Activated CD4-positive, alpha-beta memory T cell treated with anti-CD3 and anti-CD28 coated beads, Interleukin-2, amount 10 ng/mL, durations not matched to agents 7 days and 5 days (primary cell): ENCODE measurements at regions of chr1 and their contacts with region 1.

Region 1: GRCh38 chr1:44730741-44731512 is at the start of gene RNU5D-1:
- DNase-seq: peak; percentile 95
- H3K4me3 Mint-ChIP-seq: peak within 1 kb of the TSS; percentile 62
- H3K27ac Mint-ChIP-seq: peak within 1 kb of the TSS; percentile 99
- H3K4me1 Mint-ChIP-seq: peaks cover 35% of the 10 kb centered on the region
- H3K27me3 Mint-ChIP-seq: peaks cover 4% of the 10 kb centered on the region
- total RNA-seq, gene RNU5D-1: not detected

Region 2: DNA sequence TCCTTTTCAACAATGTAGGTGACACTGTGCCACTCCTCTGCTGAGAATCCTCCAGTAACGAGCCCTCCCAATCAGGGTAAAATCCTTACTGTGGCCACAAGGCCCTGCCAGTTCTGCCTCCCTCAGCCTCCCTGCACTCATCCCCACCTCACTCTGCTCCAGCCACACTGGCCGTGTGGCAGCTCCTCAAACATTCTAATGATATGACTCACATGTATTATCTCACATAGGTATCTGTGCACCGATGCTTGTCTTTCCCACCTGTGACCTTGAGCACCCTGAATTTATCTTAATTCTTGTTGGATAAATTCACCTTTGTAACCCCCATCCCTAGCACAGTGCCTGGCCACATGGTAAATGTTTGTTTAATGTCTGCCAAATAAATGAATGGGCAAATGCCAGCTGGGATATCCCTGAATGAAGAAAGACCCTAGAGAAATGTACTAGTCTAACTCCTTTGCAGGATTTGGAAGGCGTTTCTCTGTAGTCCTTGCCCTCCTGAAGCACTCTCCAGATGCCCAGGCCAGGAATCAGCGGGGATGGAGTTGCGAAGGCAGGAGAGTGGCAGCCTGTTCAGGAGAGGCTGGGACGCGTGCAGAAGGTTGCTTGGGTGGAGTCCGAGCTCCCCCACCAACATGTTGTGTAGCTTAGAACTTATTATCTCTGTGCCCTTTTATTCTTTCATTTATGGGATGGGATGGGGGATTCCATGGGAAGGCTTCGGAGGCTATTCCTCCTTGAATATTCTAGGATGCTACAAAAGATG is 162.6 kb before region 1 on chr1:
- CTCF ChIA-PET with region 1: no interaction called
- POLR2A ChIA-PET with region 1: no interaction called
- DNase-seq: no peak
- H3K4me3 Mint-ChIP-seq: no peak overlapping the region
- H3K27ac Mint-ChIP-seq: no peak overlapping the region
- H3K4me1 Mint-ChIP-seq: no peaks in the 10 kb centered on the region
- H3K27me3 Mint-ChIP-seq: peaks cover 28% of the 10 kb centered on the region

Region 3: GRCh38 chr1:44714944-44715571 is 15.9 kb before region 1 on chr1:
- CTCF ChIA-PET with region 1: interaction called, 59 read pairs
- POLR2A ChIA-PET with region 1: interaction called, 785 read pairs
- DNase-seq: peak; percentile 74
- H3K4me3 Mint-ChIP-seq: peak overlapping the region; percentile 24
- H3K27ac Mint-ChIP-seq: peak overlapping the region; percentile 64
- H3K4me1 Mint-ChIP-seq: peaks cover 44% of the 10 kb centered on the region
- H3K27me3 Mint-ChIP-seq: peaks cover 12% of the 10 kb centered on the region

Region 4: DNA sequence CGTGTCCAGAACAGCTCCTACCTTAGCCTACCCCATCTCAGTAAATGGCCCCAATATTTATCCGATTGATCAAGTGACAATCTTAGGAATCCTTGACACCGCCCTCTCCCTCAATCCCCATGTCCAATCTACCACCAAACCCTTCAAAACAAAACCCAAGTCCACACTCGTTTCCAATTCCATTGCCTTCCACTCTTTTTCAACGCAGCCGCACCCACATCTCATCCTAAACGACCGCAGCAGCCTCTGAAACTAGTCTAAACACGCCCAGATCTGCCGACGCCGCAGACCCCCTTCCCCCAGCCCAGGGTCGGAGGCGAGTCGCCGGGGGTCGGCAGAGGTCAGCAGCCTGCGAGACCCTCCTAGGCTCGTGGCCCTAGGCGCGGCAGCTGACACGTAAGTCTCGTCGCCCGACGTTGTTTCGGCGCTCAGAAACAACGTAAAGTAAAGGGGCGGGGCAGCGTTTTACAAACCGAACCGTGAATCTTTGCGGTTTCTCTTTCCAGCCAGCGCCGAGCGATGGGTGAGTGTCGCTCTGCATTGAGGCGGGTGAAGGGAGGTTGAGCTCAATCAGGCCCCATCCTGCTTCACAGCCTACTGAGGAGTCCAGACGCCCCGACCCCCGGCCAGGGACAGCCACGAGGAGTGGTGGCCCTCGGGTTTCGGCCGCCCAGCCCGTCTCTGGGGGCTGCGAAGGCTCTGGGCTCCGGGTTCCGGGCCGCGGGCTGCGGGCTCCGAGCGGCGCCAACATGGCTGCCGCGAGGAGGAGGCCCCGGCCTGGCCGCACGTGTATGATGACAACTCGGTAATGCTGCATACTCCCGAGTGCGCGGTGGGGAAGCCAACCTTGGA is 44.4 kb after region 1 on chr1 and contains the start of gene RPS8:
- CTCF ChIA-PET with region 1: interaction called, 38 read pairs
- POLR2A ChIA-PET with region 1: interaction called, 454 read pairs
- DNase-seq: peak; percentile 93
- H3K4me3 Mint-ChIP-seq: peak within 1 kb of the TSS; percentile 90
- H3K27ac Mint-ChIP-seq: peak within 1 kb of the TSS; percentile 90
- H3K4me1 Mint-ChIP-seq: peaks cover 35% of the 10 kb centered on the region
- H3K27me3 Mint-ChIP-seq: no peaks in the 10 kb centered on the region
- total RNA-seq, gene RPS8: 1,610 to 1,658 TPM

Region 5: DNA sequence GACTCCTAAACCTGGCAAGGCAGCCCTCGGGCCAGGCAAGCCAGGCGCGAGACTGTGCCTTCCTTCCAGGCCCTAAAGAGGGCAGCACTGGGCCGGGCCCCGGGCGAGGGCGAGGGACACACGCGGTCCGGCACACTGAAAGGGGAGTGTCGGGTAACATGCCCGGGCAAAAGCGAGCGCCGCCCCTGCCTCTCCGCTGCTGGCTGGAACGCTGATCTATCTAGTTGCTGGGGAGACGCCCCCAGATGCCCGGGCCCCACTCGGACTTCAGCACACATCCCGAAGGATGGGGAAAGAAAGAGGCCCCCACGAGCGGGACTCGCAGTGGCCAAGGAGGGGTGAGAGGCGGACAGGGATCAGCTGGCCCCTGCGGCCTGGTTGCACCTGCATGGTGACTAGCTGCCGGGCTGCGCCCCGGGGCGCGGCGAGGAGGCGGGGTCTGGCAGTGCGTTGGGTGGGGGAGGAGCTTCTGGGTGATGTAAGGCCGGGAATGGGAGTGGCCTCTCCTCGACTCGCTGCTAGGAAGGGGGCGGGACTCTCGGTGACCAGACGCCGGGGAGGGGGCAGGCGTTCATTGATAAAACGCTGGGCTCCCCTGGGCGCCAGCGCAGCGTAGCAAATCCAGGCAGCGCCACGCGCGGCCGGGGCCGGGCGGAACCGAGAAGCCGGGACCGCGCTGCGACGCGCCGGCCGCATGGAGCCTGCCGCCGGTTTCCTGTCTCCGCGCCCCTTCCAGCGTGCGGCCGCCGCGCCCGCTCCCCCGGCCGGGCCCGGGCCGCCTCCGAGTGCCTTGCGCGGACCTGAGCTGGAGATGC is 69.0 kb after region 1 on chr1 and contains the start of gene PLK3:
- CTCF ChIA-PET with region 1: interaction called, 5 read pairs
- POLR2A ChIA-PET with region 1: interaction called, 125 read pairs
- DNase-seq: peak; percentile 98
- H3K4me3 Mint-ChIP-seq: peak within 1 kb of the TSS; percentile 90
- H3K27ac Mint-ChIP-seq: peak within 1 kb of the TSS; percentile 98
- H3K4me1 Mint-ChIP-seq: peaks cover 47% of the 10 kb centered on the region
- H3K27me3 Mint-ChIP-seq: no peaks in the 10 kb centered on the region
- total RNA-seq, gene PLK3: 62.8 to 63.5 TPM

Region 6: GRCh38 chr1:44819608-44820327 is 88.8 kb after region 1 on chr1:
- CTCF ChIA-PET with region 1: interaction called, 6 read pairs
- POLR2A ChIA-PET with region 1: interaction called, 229 read pairs
- DNase-seq: peak; percentile 87
- H3K4me3 Mint-ChIP-seq: peak overlapping the region; percentile 85
- H3K27ac Mint-ChIP-seq: peak overlapping the region; percentile 98
- H3K4me1 Mint-ChIP-seq: peaks cover 45% of the 10 kb centered on the region
- H3K27me3 Mint-ChIP-seq: no peaks in the 10 kb centered on the region

Region 7: DNA sequence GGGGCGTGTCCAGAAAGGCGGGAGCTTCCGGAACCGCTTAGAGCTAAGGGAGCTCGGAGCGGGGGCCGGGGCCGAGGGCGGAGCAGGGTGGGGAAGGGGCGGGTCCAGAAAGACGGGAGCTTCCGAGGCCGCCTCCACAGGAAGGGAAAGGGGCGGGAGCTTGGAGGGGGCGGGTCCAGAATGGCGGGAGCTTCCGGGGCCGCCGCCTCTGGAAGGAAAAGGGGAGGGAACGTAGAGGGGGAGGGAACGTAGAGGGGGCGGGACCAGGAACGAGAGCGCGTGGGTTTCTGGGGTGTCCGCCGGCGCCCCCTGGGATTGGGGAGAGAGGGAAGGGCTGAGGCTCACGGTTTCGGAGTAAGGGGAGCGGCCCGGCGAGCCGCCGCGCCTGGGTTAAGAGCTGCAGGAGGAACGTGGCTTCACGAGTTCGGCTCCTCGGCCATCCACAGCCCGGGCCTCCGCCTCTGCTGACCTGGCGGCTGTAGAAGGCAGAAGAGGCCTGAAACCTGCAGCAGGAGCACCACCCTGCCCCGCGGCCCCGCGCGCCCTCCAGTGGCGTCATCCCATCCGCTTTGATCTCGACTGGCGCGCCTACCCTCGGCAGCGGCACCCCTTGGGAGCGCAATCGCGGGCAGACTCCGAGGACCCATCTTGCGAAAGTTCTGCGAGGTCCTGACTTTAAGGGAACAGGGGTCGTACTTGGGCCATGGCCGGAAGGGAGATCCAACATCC is 572.8 kb after region 1 on chr1:
- CTCF ChIA-PET with region 1: interaction called, 8 read pairs
- POLR2A ChIA-PET with region 1: interaction called, 17 read pairs
- DNase-seq: peak; percentile 99
- H3K4me3 Mint-ChIP-seq: peak overlapping the region; percentile 83
- H3K27ac Mint-ChIP-seq: peak overlapping the region; percentile 86
- H3K4me1 Mint-ChIP-seq: peaks cover 44% of the 10 kb centered on the region
- H3K27me3 Mint-ChIP-seq: no peaks in the 10 kb centered on the region

Region 8: GRCh38 chr1:45516036-45516435 is 785.1 kb after region 1 on chr1:
- CTCF ChIA-PET with region 1: no interaction called
- POLR2A ChIA-PET with region 1: no interaction called
- DNase-seq: no peak
- H3K4me3 Mint-ChIP-seq: no peak overlapping the region
- H3K27ac Mint-ChIP-seq: no peak overlapping the region
- H3K4me1 Mint-ChIP-seq: peaks cover 38% of the 10 kb centered on the region
- H3K27me3 Mint-ChIP-seq: no peaks in the 10 kb centered on the region